Naive thymus-derived CD8-positive, alpha-beta T cell (primary cell): ENCODE measurements at regions of chr11 and their contacts with region 1.

Region 1: DNA sequence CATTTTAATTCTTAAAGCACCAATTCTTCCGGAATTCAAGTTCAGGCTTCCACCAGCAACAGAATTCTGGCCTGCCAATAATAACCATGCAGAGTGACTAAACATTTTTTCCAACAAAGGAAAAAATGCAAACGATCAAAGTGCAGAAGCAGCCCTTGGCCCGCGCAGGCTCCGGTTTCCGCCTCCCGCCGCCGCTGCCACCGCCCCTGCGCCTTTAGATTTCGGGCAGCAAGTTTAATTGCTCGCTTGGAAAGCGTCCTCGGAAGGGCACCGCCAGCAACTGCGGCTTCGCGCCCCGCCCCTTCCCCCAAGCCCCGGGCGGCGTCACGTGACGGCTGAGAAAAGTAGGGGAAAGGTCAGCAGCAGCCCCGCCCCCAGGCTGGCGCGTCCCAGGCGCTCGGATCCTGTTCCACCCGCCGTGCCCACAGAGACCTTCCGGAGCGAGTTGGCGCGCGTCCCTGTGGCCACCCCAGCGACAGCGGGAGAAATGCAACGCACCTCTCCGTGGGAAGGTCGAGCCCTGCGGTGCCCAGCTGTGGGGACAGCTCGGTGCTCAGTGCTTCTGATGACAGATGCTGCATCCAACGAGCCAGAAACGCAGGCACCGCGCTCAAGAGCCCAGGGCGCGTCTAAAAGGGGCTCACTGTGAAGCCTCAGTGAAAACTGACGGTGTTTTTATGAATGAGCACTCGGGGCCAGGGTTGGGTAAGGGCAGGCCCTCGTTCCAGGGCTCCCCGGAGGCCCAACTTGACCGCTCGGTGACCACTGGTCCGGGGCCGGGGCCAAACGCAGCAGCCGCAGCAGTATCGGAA is 2.5 kb downstream of the CPT1A start:
- DNase-seq: peak; percentile 91 to 97 (median 94)
- ATAC-seq: peak; percentile 60 to 75
- H3K4me3 Mint-ChIP-seq: peak overlapping the region; percentile 83 to 95 (median 89)
- H3K27ac Mint-ChIP-seq: peak overlapping the region; percentile 80 to 97 (median 94)
- H3K4me1 Mint-ChIP-seq: peaks cover 29 to 70% (median 61%) of the 10 kb centered on the region in 4 donors
- H3K27me3 Mint-ChIP-seq: no peaks in the 10 kb centered on the region

Region 2: GRCh38 chr11:68767672-68768071 is 71.6 kb before region 1 on chr11:
- POLR2A ChIA-PET with region 1: no interaction called
- DNase-seq: no peak
- ATAC-seq: no peak
- H3K4me3 Mint-ChIP-seq: no peak overlapping the region
- H3K27ac Mint-ChIP-seq: no peak overlapping the region
- H3K4me1 Mint-ChIP-seq: peaks cover 0 to 6% (median 0%) of the 10 kb centered on the region in 4 donors
- H3K27me3 Mint-ChIP-seq: no peaks in the 10 kb centered on the region

Region 3: DNA sequence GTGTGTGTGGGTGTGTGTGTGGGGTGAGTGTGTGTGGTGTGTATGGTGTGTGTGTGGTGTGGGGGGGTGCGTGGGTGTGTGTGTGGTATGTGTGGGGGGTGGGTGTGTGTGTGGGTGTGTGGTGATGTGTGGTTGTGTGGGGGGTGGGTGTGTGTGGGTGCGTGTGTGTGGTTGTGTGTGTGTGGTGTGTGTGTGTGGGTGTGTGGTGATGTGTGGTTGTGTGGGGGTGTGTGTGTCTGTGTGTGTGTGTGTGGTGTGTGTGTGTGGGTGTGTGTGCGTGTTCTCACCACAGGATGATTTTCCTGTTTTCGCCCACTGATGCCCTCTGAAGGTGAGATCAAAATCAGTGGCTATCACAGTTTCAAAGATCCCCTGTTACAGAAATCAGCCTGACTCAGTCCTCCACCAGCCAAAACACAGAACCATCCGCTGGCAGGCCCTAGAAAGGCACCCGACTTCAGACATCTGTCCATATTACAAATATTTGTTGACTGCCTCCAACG is 22.3 kb before region 1 on chr11:
- POLR2A ChIA-PET with region 1: interaction called, 72 read pairs
- DNase-seq: peak in 2 of 10 donors; percentile 10 to 24
- ATAC-seq: peak; percentile 63 to 64
- H3K4me3 Mint-ChIP-seq: peak overlapping the region in 9 of 10 donors; percentile 24 to 73 (median 59)
- H3K27ac Mint-ChIP-seq: peak overlapping the region; percentile 74 to 95 (median 90)
- H3K4me1 Mint-ChIP-seq: peaks cover 23 to 56% (median 30%) of the 10 kb centered on the region in 4 donors
- H3K27me3 Mint-ChIP-seq: no peaks in the 10 kb centered on the region

Region 4: DNA sequence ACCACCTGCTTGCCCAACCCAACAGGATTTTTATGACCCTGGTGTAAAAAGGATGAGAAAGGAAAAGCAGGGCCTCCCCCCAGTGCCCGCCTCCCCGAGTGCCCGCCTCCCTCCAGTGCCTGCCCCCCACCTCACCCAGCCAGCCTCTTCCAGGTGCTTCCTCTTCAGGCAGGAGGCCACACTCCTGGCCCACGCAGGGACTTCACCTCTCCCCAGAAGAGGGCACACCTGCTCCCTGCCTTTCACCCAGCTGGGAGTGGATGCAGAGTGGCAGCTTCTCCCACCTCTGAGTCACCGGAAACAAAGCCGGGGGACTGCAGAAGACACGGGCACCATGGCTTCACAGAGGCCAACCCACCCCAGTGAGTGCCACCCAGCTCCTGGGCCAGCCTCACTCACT is 13.7 kb before region 1 on chr11:
- POLR2A ChIA-PET with region 1: interaction called, 72 read pairs
- DNase-seq: peak; percentile 36 to 81 (median 49)
- ATAC-seq: peak; percentile 83 to 92
- H3K4me3 Mint-ChIP-seq: peak overlapping the region in 5 of 10 donors; percentile 6 to 60 (median 49)
- H3K27ac Mint-ChIP-seq: peak overlapping the region in 7 of 10 donors; percentile 13 to 63 (median 44)
- H3K4me1 Mint-ChIP-seq: peaks cover 25 to 69% (median 51%) of the 10 kb centered on the region in 4 donors
- H3K27me3 Mint-ChIP-seq: no peaks in the 10 kb centered on the region

Region 5: GRCh38 chr11:68878022-68878421 is 38.8 kb after region 1 on chr11:
- POLR2A ChIA-PET with region 1: no interaction called
- DNase-seq: no peak
- ATAC-seq: no peak
- H3K4me3 Mint-ChIP-seq: no peak overlapping the region
- H3K27ac Mint-ChIP-seq: peak overlapping the region in 1 of 10 donors; percentile 37
- H3K4me1 Mint-ChIP-seq: peaks cover 0 to 2% (median 0%) of the 10 kb centered on the region in 4 donors
- H3K27me3 Mint-ChIP-seq: no peaks in the 10 kb centered on the region

Region 6: GRCh38 chr11:68889948-68890446 is 50.7 kb after region 1 on chr11:
- POLR2A ChIA-PET with region 1: no interaction called
- DNase-seq: no peak
- ATAC-seq: no peak
- H3K4me3 Mint-ChIP-seq: no peak overlapping the region
- H3K27ac Mint-ChIP-seq: no peak overlapping the region
- H3K4me1 Mint-ChIP-seq: no peaks in the 10 kb centered on the region
- H3K27me3 Mint-ChIP-seq: no peaks in the 10 kb centered on the region